Caco-2 (cell line): ENCODE measurements at regions of chr5 and their contacts with region 1.

Region 1: GRCh38 chr5:34007621-34008600 is at the start of gene AMACR:
- DNase-seq: peak; percentile 95 to 97
- H3K4me3 ChIP-seq: peak within 1 kb of the TSS; percentile 85
- H3K4me3 Mint-ChIP-seq: peak within 1 kb of the TSS; percentile 84
- H3K27ac Mint-ChIP-seq: peak within 1 kb of the TSS; percentile 85
- H3K4me1 ChIP-seq: peaks cover 50% of the 10 kb centered on the region
- H3K4me1 Mint-ChIP-seq: peaks cover 45% of the 10 kb centered on the region
- H3K27me3 ChIP-seq: no peaks in the 10 kb centered on the region
- H3K27me3 Mint-ChIP-seq: no peaks in the 10 kb centered on the region
- CTCF ChIP-seq: no peak
- total RNA-seq, gene AMACR: 196 and 204 TPM in 2 replicates

Region 2: DNA sequence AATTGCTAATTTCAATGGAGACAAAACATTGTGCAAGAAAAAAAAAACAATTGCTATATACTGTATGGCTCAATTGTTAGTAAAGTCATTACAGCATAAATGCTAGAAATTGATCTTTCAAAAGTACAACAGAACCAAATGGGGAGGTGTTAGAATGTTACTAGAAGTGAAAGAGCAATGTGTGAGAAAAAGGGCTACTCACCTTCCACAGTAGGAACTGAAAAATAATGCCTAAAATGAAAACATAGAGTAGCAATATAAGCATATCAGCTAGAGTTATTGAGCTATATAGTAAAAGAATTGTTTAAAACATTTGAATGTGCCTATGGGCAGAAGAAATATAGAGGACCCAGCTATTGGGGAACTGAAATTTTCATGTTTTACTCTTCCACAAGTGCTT is 82.6 kb before region 1 on chr5:
- CTCF ChIA-PET with region 1: no interaction called
- POLR2A ChIA-PET with region 1: no interaction called
- intact Hi-C with region 1: no loop called
- DNase-seq: no peak
- H3K4me3 ChIP-seq: no peak overlapping the region
- H3K4me3 Mint-ChIP-seq: no peak overlapping the region
- H3K27ac Mint-ChIP-seq: no peak overlapping the region
- H3K4me1 ChIP-seq: no peaks in the 10 kb centered on the region
- H3K4me1 Mint-ChIP-seq: no peaks in the 10 kb centered on the region
- H3K27me3 ChIP-seq: no peaks in the 10 kb centered on the region
- H3K27me3 Mint-ChIP-seq: no peaks in the 10 kb centered on the region
- CTCF ChIP-seq: no peak

Region 3: DNA sequence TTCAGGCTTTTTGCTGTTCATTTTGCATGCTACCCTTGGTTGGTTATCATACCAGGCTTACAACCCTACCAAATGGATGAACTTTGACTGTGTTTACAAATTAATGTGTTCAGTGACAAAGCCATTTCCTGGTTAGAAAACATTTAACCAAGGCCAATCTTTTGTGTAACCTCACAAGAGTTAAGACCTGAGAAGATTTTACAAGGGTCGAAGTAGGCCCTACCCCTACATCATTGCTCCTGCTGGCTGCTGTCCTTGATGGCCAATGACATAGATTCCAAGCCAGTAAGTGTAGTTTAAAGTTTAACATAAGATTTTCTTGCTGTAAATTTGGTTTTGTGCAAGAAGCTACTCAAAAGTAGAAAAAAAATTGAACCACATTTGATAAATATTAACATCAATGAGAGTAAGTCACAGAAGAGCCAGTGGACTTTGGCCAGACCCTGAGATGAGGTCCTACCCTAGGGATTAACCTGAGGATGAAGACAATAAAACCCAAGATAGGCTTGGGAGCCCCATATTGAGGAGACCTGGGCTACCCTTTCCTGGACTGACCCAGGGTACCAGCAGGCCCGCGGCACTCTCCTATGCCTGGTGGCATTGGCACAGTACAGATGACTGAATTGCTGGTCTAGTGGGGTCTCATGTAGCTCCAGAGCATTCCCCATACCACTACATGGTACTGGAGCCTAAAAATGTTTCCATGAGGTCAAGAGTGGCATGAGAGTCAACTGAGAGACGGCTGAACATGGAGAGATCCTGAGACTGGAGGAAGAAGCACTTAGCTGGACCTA is 26.8 kb after region 1 on chr5:
- CTCF ChIA-PET with region 1: no interaction called
- POLR2A ChIA-PET with region 1: interaction called, 10 read pairs
- intact Hi-C with region 1: loop called (anchors 1 kb)
- DNase-seq: peak; percentile 23 to 69
- H3K4me3 ChIP-seq: no peak overlapping the region
- H3K4me3 Mint-ChIP-seq: peak overlapping the region; percentile 5
- H3K27ac Mint-ChIP-seq: peak overlapping the region; percentile 26
- H3K4me1 ChIP-seq: peaks cover 73% of the 10 kb centered on the region
- H3K4me1 Mint-ChIP-seq: peaks cover 35% of the 10 kb centered on the region
- H3K27me3 ChIP-seq: no peaks in the 10 kb centered on the region
- H3K27me3 Mint-ChIP-seq: no peaks in the 10 kb centered on the region
- CTCF ChIP-seq: no peak